K562 (cell line): ENCODE measurements at regions of chr7 and their contacts with region 1.

Region 1: GRCh38 chr7:25894902-25895791 is 256.9 kb upstream of the NFE2L3 start:
- DNase-seq: peak; percentile 71 to 79 (median 74)
- ATAC-seq: peak; percentile 87
- H3K4me3 ChIP-seq: peak overlapping the region; percentile 4; the same call in 1 of the 2 replicates
- H3K27ac ChIP-seq: no peak overlapping the region
- H3K4me1 ChIP-seq: peaks cover 4 to 18% of the 10 kb centered on the region in 2 experiments; a peak in 4 of 5 replicates
- H3K27me3 ChIP-seq: no peaks in the 10 kb centered on the region; a peak in 1 of 5 replicates
- CTCF ChIP-seq: peak; percentile 50 to 74 (median 63)
- EP300 ChIP-seq: no peak
- POLR2A ChIP-seq: no peak
- RAD21 ChIP-seq: peak; percentile 62 to 68

Region 2: DNA sequence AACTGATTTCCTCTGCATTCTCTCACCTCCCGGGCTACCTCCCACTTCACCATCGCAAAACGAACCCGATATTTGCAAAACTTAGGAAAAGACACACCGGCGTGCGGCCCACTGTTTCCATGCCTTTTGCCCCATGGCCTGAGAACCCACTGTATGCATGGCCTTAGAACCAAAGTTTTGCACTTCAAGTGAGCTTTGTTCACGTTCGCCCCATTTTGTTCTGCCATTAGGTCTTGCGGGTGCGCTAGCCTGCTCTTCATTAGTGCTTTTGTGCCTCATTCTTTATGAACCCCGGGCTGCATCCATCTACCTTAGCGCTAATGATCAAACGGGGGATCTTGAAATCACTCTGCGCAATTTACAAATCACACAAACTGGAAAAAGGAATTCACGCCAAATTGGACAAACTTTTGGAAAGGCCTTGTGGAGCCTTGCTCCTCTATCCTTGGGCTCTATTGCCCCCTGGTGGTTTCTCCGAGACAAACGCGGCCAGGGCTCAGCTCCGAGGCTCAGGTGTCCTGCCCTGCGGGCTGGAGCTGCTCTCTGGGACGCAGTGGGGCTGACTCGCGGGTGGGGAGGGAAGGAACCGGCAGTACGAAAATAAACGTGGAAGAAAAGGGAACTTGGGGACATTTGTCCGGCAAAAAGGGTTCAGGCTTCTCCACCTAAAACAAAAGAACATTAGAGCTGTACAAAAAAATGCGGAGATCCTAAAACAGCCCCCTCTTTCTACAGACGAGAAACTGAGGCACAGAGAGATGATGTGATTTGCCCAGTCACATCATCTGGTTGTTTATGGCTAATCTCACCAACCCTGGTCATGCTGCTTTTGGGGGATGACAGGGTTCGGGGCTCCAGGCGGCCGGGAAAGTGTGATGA is 43.6 kb before region 1 on chr7:
- CTCF ChIA-PET with region 1: interaction called, 3 read pairs
- POLR2A ChIA-PET with region 1: interaction called, 3 read pairs
- in situ Hi-C with region 1: no loop called
- intact Hi-C with region 1: loop called (anchors 2 kb)
- DNase-seq: peak; percentile 62 to 89 (median 65)
- ATAC-seq: peak; percentile 63
- H3K4me3 ChIP-seq: no peak overlapping the region
- H3K27ac ChIP-seq: no peak overlapping the region
- H3K4me1 ChIP-seq: peaks cover 11 to 17% of the 10 kb centered on the region in 2 experiments
- H3K27me3 ChIP-seq: no peaks in the 10 kb centered on the region
- CTCF ChIP-seq: peak; percentile 85 to 91 (median 89)
- EP300 ChIP-seq: no peak
- POLR2A ChIP-seq: no peak
- RAD21 ChIP-seq: peak; percentile 95 to 96

Region 3: GRCh38 chr7:25949736-25950487 is 54.8 kb after region 1 on chr7:
- CTCF ChIA-PET with region 1: no interaction called
- POLR2A ChIA-PET with region 1: interaction called, 3 read pairs
- in situ Hi-C with region 1: loop called (anchors 5 kb)
- intact Hi-C with region 1: loop called (anchors 1 kb)
- DNase-seq: peak; percentile 32 to 77 (median 42)
- ATAC-seq: peak; percentile 80
- H3K4me3 ChIP-seq: peak overlapping the region; percentile 80
- H3K27ac ChIP-seq: peak overlapping the region; percentile 79
- H3K4me1 ChIP-seq: peaks cover 13 to 20% of the 10 kb centered on the region in 2 experiments
- H3K27me3 ChIP-seq: 0 out of 5 replicates have a peak, but pooled peaks cover 0 to 2% of the 10 kb centered on the region in 2 experiments
- CTCF ChIP-seq: peak; percentile 31 to 70 (median 44); a peak in 5 of 6 replicates
- EP300 ChIP-seq: no peak
- POLR2A ChIP-seq: no peak
- RAD21 ChIP-seq: peak; percentile 40 to 56

Region 4: GRCh38 chr7:26078437-26079336 is 183.5 kb after region 1 on chr7:
- CTCF ChIA-PET with region 1: no interaction called
- POLR2A ChIA-PET with region 1: interaction called, 3 read pairs
- in situ Hi-C with region 1: no loop called
- intact Hi-C with region 1: loop called (anchors 5 kb)
- DNase-seq: peak; percentile 16 to 69 (median 38)
- ATAC-seq: peak; percentile 93
- H3K4me3 ChIP-seq: no peak overlapping the region
- H3K27ac ChIP-seq: no peak overlapping the region
- H3K4me1 ChIP-seq: peaks cover 0 to 4% of the 10 kb centered on the region in 2 experiments; a peak in 3 of 5 replicates
- H3K27me3 ChIP-seq: peaks cover 9 to 22% of the 10 kb centered on the region in 2 experiments
- CTCF ChIP-seq: peak; percentile 62 to 69 (median 67)
- EP300 ChIP-seq: no peak
- POLR2A ChIP-seq: no peak
- RAD21 ChIP-seq: peak; percentile 71 to 78

Region 5: DNA sequence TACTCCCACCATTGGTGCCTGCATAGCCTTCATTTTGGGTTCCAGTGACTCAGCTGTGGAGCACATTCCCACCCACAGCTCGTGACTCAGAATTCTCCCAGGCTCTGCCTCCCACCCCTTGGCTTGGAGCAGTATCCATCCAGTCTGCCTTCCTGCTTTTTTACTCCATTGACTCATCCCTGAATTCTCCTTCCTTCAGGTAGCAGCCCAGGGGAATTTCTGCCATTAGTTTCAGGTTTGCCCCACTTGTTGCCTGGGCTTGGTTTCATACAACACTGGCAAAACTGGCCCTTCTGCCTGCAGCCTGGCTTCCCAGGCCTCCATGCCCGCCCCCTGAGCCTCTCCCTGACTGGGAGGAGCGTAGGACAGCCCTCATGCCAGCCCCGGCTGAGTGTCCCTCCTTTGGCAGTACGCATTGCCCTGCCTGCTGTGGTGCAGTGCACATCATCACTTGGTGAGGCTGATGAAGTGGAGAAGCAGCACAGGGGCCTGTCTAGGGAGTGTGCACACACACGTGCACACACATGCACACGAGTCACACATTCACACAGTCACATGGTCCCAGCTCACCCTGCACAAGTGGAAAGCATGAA is 451.6 kb after region 1 on chr7:
- CTCF ChIA-PET with region 1: no interaction called
- POLR2A ChIA-PET with region 1: no interaction called
- in situ Hi-C with region 1: no loop called
- intact Hi-C with region 1: no loop called
- DNase-seq: no peak
- ATAC-seq: no peak
- H3K4me3 ChIP-seq: no peak overlapping the region
- H3K27ac ChIP-seq: no peak overlapping the region
- H3K4me1 ChIP-seq: no peaks in the 10 kb centered on the region
- H3K27me3 ChIP-seq: no peaks in the 10 kb centered on the region
- CTCF ChIP-seq: no peak
- EP300 ChIP-seq: no peak
- POLR2A ChIP-seq: no peak
- RAD21 ChIP-seq: no peak

Region 6: DNA sequence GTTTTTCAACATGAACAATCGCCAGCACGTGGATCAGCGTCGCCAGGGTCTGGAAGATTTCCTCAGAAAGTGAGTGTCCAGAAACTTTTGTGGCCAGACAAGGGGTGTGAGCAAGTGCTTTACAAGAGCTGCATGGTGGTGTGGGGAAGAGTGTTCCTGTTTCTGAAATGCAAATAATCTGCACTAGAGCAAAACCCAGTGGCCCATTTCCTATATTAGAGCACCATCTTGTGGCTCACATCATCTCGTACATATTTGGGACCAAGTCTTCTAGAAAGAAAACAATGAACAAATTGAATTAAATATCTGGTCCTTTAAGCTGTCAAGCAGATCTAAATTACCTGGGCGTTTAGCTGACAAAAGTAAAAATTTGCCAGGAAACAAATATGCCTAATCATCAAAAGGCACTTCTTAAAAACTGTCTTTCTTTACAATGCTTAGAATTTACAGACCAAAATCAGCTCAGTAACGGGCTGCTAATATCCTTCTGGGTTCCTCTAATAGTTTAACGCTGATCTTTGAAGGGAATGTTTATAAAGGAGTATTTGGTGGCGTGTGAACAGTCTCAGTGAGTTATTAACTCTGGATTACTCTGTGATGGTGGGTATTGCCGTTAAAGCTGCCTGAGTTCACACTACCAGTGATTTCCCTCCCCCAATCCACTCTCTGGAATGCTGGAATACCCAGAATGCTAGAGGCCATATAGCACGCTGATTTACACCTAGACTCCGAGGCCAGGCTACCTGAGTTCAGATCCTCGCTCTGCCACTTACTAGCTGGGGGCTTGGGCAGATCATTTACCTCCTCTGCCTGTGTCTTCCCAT is 470.1 kb after region 1 on chr7:
- CTCF ChIA-PET with region 1: interaction called, 27 read pairs
- POLR2A ChIA-PET with region 1: interaction called, 9 read pairs
- in situ Hi-C with region 1: loop called (anchors 5 kb)
- intact Hi-C with region 1: loop called (anchors 1 kb)
- DNase-seq: peak; percentile 18 to 78 (median 30)
- ATAC-seq: peak; percentile 86
- H3K4me3 ChIP-seq: no peak overlapping the region
- H3K27ac ChIP-seq: no peak overlapping the region
- H3K4me1 ChIP-seq: no peaks in the 10 kb centered on the region; a peak in 1 of 5 replicates
- H3K27me3 ChIP-seq: no peaks in the 10 kb centered on the region
- CTCF ChIP-seq: peak; percentile 70 to 90 (median 71); a peak in 5 of 6 replicates
- EP300 ChIP-seq: no peak
- POLR2A ChIP-seq: no peak
- RAD21 ChIP-seq: peak; percentile 97 to 98

Region 7: DNA sequence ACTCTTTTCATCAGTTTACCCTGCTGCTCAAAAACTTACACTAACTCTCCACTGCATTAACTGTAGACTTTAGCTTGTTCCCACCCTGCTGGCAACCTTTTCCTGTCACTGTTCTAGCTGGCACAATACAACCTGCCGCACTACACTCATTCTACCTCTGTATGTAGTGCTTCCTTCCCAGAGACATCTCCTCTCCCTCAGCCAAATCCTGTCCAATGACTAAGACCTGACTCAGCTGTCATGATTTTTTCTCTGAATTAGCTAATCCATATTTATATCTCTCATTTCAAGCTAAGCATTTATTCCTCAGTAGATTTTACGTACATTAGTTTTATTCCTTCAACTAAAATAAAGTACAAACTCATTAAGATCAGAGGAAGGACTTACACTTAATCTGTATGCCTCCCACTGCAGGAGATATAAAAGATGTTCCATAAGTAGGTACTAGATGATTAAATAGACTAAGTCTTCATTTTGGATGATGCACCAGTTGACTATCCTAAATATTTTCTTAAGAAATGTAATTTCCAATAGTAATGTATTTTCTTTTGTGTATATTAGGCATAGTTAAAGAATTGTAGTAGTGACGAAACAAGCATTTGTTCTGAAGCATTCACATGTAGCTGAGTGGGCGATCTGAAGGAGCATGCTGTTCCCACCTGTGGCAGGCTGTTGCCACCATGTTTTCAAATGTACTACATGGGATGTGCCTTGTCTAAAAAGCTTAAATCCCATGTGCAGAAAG is 780.2 kb after region 1 on chr7:
- CTCF ChIA-PET with region 1: no interaction called
- POLR2A ChIA-PET with region 1: no interaction called
- in situ Hi-C with region 1: loop called (anchors 10 kb)
- intact Hi-C with region 1: no loop called
- DNase-seq: no peak
- ATAC-seq: no peak
- H3K4me3 ChIP-seq: no peak overlapping the region
- H3K27ac ChIP-seq: no peak overlapping the region
- H3K4me1 ChIP-seq: no peaks in the 10 kb centered on the region; a peak in 1 of 5 replicates
- H3K27me3 ChIP-seq: 0 out of 5 replicates have a peak, but pooled peaks cover 0 to 2% of the 10 kb centered on the region in 2 experiments
- CTCF ChIP-seq: no peak
- EP300 ChIP-seq: no peak
- POLR2A ChIP-seq: no peak
- RAD21 ChIP-seq: no peak